WTC11 (cell line): ENCODE measurements at regions of chr7 and their contacts with region 1.

Region 1: DNA sequence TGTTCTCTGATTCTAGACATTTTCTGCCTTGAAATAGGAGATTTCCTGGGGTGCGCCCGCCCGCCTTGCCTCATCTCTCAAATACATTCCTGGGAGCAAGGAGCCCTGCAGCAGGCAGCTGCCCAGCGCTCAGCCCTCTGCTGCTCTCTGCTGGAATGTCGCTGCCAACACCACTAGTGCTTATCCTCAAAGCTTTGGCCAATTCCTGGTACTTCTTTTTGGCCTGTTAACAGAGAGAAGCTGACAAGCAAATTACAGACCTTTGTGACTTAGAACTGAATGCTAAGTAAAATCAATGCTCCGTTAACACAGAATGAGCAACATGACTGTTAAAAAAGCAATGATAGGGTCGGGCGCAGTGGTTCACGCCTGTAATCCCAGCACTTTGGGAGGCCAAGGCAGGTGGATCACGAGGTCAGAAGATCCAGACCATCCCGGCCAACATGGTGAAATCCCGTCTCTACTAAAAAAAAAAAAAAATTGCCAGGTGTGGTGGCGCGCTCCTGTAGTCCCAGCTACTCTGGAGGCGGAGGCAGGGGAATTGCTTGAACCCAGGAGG is 41.9 kb upstream of the SYPL1 start:
- DNase-seq: peak; percentile 90
- ATAC-seq: peak; percentile 99
- H3K4me3 Mint-ChIP-seq: no peak overlapping the region
- H3K27ac Mint-ChIP-seq: no peak overlapping the region
- H3K4me1 Mint-ChIP-seq: peaks cover 9% of the 10 kb centered on the region
- H3K27me3 Mint-ChIP-seq: no peaks in the 10 kb centered on the region; the same call in 1 of the 2 replicates
- CTCF ChIP-seq: peak; percentile 64

Region 2: DNA sequence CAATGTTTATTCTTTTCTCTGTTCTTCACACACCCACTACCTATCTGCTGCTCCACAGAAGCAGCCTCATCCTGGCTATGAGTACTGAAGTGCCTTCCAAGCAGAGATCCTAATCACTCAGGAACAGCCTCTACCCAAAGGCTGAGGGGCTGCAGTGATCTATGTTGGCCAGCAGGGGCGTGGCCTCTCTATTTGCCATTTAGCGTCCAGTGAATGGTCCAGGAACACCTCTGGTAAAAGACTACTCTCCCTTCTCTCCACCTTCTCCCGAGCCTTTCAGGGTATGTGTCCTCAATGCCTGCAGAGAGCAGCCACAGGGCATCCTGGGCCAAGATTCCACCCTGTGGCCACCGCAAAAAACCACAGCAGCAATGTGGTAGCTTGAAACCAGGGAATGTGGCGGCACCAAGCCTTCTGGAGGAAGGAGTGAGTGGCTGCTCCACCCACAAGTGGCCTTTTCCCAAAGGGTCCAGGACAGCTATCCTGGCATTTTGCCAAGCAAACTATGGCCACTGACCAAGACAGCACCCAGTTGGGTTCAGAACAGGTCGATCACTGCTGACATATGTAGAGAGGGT is 112.7 kb before region 1 on chr7:
- CTCF ChIA-PET with region 1: interaction called, 19 read pairs
- POLR2A ChIA-PET with region 1: no interaction called
- DNase-seq: peak; percentile 72
- ATAC-seq: peak; percentile 71
- H3K4me3 Mint-ChIP-seq: no peak overlapping the region
- H3K27ac Mint-ChIP-seq: no peak overlapping the region
- H3K4me1 Mint-ChIP-seq: peaks cover 23% of the 10 kb centered on the region
- H3K27me3 Mint-ChIP-seq: no peaks in the 10 kb centered on the region; the same call in 1 of the 2 replicates
- CTCF ChIP-seq: peak; percentile 97

Region 3: DNA sequence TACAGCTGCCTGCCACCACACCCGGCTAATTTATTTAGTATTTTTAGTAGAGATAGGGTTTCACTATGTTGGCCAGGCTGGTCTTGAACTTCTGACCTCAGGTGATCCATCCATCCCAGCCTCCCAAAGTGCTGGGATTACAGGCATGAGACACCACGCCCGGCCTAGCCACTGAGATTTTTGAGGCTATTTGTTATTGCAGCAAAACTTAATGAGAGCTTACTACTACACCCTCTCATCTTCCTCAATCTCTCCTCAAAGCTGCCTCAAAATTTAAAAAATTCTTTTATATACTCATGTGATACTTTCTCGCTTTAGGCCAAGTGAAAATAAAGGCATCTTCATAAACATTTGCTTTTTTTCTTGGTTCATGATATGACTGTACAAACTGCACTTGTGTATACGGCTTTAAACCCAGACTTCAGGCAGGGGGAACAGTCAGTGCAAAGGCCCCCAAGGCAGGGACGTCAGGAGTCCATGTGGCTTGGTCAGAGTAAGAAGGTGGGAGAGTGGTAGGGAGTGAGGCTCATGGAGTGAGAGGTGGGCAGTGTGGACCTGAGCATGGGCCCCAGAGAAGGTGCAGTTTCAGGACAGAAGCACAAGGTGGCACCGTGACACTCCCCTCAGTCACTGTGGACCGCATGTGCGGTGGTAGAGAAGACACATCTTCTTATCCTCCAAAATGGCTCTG is 97.3 kb before region 1 on chr7:
- CTCF ChIA-PET with region 1: interaction called, 44 read pairs
- POLR2A ChIA-PET with region 1: no interaction called
- DNase-seq: peak; percentile 70
- ATAC-seq: peak; percentile 93
- H3K4me3 Mint-ChIP-seq: no peak overlapping the region
- H3K27ac Mint-ChIP-seq: no peak overlapping the region
- H3K4me1 Mint-ChIP-seq: peaks cover 21% of the 10 kb centered on the region
- H3K27me3 Mint-ChIP-seq: peaks cover 3% of the 10 kb centered on the region; the same call in 1 of the 2 replicates
- CTCF ChIP-seq: peak; percentile 64

Region 4: GRCh38 chr7:106112117-106112971 is 41.6 kb before region 1 on chr7 and contains the start of gene SYPL1:
- CTCF ChIA-PET with region 1: interaction called, 12 read pairs
- POLR2A ChIA-PET with region 1: interaction called, 3 read pairs
- DNase-seq: peak; percentile 91
- ATAC-seq: peak; percentile 91
- H3K4me3 Mint-ChIP-seq: peak within 1 kb of the TSS; percentile 77
- H3K27ac Mint-ChIP-seq: peak within 1 kb of the TSS; percentile 91
- H3K4me1 Mint-ChIP-seq: peaks cover 42% of the 10 kb centered on the region
- H3K27me3 Mint-ChIP-seq: no peaks in the 10 kb centered on the region
- CTCF ChIP-seq: no peak
- total RNA-seq, gene SYPL1: 48.5 to 54.8 TPM (median 49.6 TPM) in 3 replicates

Region 5: GRCh38 chr7:106166655-106167342 is 12.8 kb after region 1 on chr7:
- CTCF ChIA-PET with region 1: interaction called, 18 read pairs
- POLR2A ChIA-PET with region 1: interaction called, 3 read pairs
- DNase-seq: peak; percentile 40
- ATAC-seq: peak; percentile 73
- H3K4me3 Mint-ChIP-seq: no peak overlapping the region
- H3K27ac Mint-ChIP-seq: peak overlapping the region; percentile 78
- H3K4me1 Mint-ChIP-seq: peaks cover 15% of the 10 kb centered on the region
- H3K27me3 Mint-ChIP-seq: 0 out of 2 replicates have a peak, but pooled peaks cover 3% of the 10 kb centered on the region
- CTCF ChIP-seq: peak; percentile 80